ENCODE measurements at regions of chr5 and their contacts with region 1.

Region 1: GRCh38 chr5:122774861-122775549 is at the start of gene SNX2:
- DNase-seq: peak; percentile 98
- ATAC-seq: peak; percentile 99
- total RNA-seq, gene SNX2: 41.4 TPM

Region 2: DNA sequence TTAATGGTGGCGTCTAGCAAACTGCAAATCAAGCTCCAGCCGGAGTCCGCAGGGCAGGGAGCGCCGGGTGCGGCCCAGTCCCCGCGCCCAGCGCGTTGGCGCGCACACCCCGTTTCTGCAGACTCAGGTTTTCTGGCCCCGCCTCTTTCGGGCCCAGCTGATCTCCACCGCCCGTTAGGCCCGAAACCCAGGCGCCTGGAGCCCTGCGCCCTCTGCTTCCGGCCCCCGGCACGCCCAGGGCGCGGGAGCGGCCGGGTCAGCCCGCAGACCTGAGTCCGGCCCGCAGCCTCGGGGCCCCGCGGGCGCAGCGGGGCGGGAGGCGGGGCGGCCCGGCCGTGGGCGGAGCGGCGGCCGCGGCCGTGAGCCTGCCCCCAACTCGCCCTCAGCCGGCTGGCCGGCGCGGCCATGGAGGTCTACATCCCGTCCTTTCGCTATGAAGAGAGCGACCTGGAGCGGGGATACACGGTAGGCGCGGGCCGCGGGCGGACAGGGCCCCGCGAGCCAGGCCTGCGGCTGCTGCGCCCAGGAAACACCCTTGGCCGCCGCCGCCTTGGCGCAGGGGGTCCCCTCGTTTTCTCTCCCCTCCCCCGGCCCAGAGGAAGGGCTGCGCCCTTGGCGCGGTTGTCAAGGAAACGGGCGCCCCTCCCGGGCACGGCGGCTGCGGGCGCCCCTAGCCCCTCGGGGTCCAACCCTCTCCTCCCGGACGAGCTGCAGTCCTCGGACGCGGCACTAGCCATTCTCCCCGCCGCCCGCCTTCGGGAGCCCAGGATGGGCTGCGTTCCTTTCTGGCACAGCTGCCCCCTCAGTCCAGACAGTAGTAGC is 70.4 kb after region 1 on chr5 and contains the start of gene SNX24:
- intact Hi-C with region 1: loop called (anchors 5 kb)
- DNase-seq: peak; percentile 93
- ATAC-seq: peak; percentile 91
- total RNA-seq, gene SNX24: 14.0 TPM

Region 3: GRCh38 chr5:123036391-123037103 is 261.5 kb after region 1 on chr5 and contains the start of gene PPIC:
- intact Hi-C with region 1: loop called (anchors 5 kb)
- DNase-seq: peak; percentile 91
- ATAC-seq: peak; percentile 98
- total RNA-seq, gene PPIC: 46.0 TPM

Measured in Right ventricle myocardium inferior (tissue), 1 donor.